ENCODE measurements at regions of chrX and their contacts with region 1.

Region 1: GRCh38 chrX:18674788-18675735 is 3.2 kb upstream of the RS1 start:
- DNase-seq: peak in 1 of 2 donors; percentile 85
- H3K4me3 ChIP-seq: peak overlapping the region; percentile 60 to 69
- H3K27ac ChIP-seq: peak overlapping the region; percentile 89 to 95
- H3K4me1 ChIP-seq: no peaks in the 10 kb centered on the region
- H3K27me3 ChIP-seq: no peaks in the 10 kb centered on the region
- CTCF ChIP-seq: no peak

Region 2: DNA sequence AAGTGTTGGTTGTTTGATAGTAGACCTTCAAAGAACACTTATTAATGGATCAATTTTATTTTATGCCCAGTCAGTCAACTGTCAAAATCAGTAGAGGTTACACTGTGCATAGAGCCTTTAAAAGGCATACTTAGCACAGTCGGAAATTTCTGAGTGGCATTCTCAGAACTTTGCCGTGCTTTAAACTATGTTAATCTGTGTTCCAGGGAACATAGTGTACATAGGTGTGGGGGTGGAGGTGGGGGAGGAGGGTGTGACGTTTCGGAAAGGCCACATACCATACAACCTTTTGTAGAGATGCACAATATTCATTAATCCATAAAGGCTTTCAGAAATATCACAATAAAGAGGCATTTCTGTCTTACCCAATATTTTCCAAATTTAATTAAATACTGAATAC is 79.0 kb before region 1 on chrX:
- intact Hi-C with region 1: no loop called
- DNase-seq: no peak
- H3K4me3 ChIP-seq: no peak overlapping the region
- H3K27ac ChIP-seq: no peak overlapping the region
- H3K4me1 ChIP-seq: no peaks in the 10 kb centered on the region
- H3K27me3 ChIP-seq: no peaks in the 10 kb centered on the region
- CTCF ChIP-seq: no peak

Region 3: DNA sequence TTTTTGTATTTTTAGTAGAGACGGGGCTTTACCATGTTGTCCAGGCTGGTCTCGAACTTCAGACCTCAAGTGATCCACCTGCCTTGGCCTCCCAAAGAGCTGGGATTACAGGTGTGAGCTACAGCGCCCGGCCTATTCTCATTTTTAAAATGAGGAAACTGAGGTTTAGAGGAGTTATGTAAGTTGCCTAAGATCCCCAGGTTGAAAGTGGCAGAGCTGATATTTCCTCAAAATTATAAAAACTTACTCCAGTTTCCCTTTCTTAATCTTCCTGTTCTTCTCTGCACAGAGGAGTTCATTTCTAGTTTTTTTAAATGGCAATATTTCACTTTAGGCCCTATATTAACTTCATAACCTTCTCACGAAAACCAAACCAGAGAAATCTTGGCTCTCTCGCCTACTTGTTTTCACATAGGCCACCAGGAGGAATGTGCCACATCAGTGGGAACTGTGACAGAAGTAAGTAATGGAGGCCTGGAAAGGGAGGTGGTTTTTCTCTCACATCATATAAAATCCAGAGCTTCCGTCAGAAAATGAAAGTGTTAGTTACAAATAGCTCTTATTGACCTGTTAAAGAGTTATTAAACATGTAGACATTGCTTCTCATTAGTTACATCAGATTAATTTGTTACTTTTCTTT is 12.9 kb after region 1 on chrX:
- intact Hi-C with region 1: loop called (anchors 1 kb)
- DNase-seq: no peak
- H3K4me3 ChIP-seq: no peak overlapping the region
- H3K27ac ChIP-seq: no peak overlapping the region
- H3K4me1 ChIP-seq: peaks cover 0 to 2% of the 10 kb centered on the region in 2 donors
- H3K27me3 ChIP-seq: no peaks in the 10 kb centered on the region
- CTCF ChIP-seq: no peak

Region 4: GRCh38 chrX:18707426-18708049 is 32.5 kb after region 1 on chrX and contains the start of gene PPEF1:
- intact Hi-C with region 1: no loop called
- DNase-seq: no peak
- H3K4me3 ChIP-seq: no peak within 1 kb of the TSS
- H3K27ac ChIP-seq: no peak within 1 kb of the TSS
- H3K4me1 ChIP-seq: no peaks in the 10 kb centered on the region
- H3K27me3 ChIP-seq: no peaks in the 10 kb centered on the region
- CTCF ChIP-seq: no peak
- total RNA-seq, gene PPEF1: not detected

Region 5: GRCh38 chrX:18797141-18797540 is 122.1 kb after region 1 on chrX:
- intact Hi-C with region 1: no loop called
- DNase-seq: no peak
- H3K4me3 ChIP-seq: no peak overlapping the region
- H3K27ac ChIP-seq: no peak overlapping the region
- H3K4me1 ChIP-seq: no peaks in the 10 kb centered on the region
- H3K27me3 ChIP-seq: no peaks in the 10 kb centered on the region
- CTCF ChIP-seq: no peak

Region 6: DNA sequence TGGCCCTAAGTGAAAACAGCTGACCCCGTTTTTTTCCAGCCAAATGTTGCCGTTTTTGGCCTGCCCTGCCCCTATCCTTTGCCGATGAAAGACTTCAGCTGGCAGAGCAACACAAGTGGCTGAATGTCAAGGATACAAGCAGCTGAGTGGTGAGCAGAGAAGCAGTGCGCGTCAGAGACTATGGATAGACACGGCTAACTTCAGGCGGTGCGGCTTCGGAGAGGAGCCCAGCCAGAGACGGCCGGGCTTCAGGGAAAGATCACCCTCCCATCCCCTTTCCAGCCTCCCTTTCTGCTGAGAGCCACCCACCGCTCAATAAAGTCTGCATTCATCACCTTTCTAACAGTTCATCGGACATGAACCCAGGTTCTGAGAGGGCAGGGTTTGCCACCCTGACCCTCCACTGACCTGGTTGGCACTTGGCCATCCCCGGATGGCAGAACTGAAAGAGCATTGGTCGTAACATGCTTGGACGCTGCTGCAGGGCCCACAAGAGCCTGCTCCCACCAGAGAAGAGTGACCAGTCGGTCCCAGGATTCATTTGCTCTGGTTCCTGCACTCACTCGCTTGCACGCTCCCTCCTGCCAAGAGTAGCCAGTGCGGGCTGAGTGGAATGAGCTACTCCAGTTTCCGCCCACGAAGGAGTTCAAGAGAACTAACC is 158.1 kb after region 1 on chrX:
- intact Hi-C with region 1: loop called (anchors 5 kb)
- DNase-seq: peak; percentile 11 to 79
- H3K4me3 ChIP-seq: peak overlapping the region in 1 of 2 donors; percentile 37
- H3K27ac ChIP-seq: peak overlapping the region; percentile 65 to 72
- H3K4me1 ChIP-seq: no peaks in the 10 kb centered on the region
- H3K27me3 ChIP-seq: no peaks in the 10 kb centered on the region
- CTCF ChIP-seq: no peak

Region 7: DNA sequence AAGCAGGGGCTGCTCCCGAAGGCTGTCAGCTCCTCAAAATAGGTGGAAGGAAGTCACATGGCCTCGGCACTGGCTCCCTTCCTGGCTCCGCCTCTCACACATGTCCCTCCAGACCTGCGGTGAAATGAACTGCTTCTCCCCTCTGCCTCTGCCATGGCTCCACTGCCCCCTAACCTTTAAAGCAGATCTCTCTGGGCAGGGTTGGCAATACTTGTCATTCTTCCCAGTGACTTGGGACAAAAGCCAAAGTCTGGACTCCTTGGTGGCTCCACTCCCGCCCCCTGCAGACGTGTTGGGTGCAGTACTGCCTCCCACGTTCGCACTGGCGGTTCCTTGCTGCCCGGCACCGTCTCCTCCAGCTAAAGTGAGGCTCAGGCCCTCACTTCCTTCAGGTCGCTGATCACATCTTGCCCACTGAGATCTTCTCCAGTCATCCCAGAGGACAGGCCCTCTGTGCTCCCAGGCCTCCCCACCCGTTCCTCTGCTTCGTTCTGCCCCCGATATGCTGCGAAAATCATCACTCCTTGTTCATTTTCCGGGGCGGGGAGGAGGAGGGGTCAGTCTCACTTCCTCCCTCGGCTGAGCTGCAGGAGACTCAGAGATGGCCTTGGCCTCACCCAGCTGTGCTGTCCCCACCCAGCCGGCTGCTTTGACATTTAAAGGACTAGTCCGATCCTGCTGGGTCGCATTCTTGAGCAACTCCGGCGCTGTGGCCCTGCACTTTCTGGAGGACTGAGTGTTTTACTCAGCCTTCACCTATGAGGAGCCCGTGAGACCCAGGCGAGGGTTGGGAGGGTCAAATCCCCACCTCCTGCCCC is 211.5 kb after region 1 on chrX:
- intact Hi-C with region 1: loop called (anchors 2 kb)
- DNase-seq: peak; percentile 60 to 91
- H3K4me3 ChIP-seq: peak overlapping the region; percentile 34 to 56
- H3K27ac ChIP-seq: peak overlapping the region; percentile 92 to 97
- H3K4me1 ChIP-seq: peaks cover 7 to 22% of the 10 kb centered on the region in 2 donors
- H3K27me3 ChIP-seq: no peaks in the 10 kb centered on the region
- CTCF ChIP-seq: peak; percentile 63 to 66 (median 65)

Region 8: GRCh38 chrX:18895189-18895951 is 220.3 kb after region 1 on chrX:
- intact Hi-C with region 1: loop called (anchors 2 kb)
- DNase-seq: peak in 1 of 2 donors; percentile 89
- H3K4me3 ChIP-seq: peak overlapping the region in 1 of 2 donors; percentile 36
- H3K27ac ChIP-seq: peak overlapping the region; percentile 84 to 85
- H3K4me1 ChIP-seq: peaks cover 0 to 15% of the 10 kb centered on the region in 2 donors
- H3K27me3 ChIP-seq: no peaks in the 10 kb centered on the region
- CTCF ChIP-seq: peak; percentile 61 to 78 (median 63)

Region 9: DNA sequence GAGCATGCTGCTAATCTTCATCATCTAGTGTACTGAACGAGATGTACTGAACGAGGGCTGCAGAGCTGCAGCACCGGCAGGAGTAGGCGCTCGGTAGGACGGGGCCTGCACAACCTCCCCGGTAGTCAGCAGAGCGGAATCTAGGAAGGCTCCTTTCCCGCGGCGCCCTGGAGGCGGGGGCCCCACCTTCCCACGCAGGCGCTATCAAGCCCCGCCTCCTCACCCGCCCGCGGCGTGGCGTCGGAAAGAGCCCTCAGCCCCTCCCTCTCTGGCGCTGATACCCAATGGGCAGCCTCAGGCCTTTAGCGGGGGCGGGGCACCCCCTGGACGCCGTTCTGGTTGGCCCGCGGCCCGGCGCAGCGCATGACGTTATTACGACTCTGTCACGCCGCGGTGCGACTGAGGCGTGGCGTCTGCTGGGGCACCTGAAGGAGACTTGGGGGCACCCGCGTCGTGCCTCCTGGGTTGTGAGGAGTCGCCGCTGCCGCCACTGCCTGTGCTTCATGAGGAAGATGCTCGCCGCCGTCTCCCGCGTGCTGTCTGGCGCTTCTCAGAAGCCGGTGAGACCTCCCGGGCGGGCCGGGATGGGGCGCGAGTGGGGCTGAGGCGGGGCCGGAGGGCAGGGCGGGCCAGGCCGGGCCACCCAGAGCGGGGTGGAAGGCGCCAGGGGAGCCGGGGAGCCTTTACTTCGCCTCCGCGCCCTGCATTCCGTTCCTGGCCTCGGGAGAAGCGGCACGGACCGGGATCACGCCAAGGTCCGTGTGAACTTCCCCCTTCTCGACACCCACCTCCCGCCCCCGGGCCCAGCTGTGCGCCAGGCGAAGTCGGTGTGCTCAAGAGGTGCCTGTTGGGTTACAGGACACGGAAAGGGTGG is 668.7 kb after region 1 on chrX and contains the start of gene PDHA1:
- intact Hi-C with region 1: loop called (anchors 10 kb)
- DNase-seq: peak; percentile 80 to 95
- H3K4me3 ChIP-seq: peak within 1 kb of the TSS; percentile 60 to 89
- H3K27ac ChIP-seq: peak within 1 kb of the TSS; percentile 80 to 90
- H3K4me1 ChIP-seq: peaks cover 0 to 3% of the 10 kb centered on the region in 2 donors
- H3K27me3 ChIP-seq: no peaks in the 10 kb centered on the region
- CTCF ChIP-seq: no peak
- total RNA-seq, gene PDHA1: 30.9 TPM

Measured in ascending aorta (tissue), 2 donors.